ENCODE measurements at regions of chr10 and their contacts with region 1.

Region 1: DNA sequence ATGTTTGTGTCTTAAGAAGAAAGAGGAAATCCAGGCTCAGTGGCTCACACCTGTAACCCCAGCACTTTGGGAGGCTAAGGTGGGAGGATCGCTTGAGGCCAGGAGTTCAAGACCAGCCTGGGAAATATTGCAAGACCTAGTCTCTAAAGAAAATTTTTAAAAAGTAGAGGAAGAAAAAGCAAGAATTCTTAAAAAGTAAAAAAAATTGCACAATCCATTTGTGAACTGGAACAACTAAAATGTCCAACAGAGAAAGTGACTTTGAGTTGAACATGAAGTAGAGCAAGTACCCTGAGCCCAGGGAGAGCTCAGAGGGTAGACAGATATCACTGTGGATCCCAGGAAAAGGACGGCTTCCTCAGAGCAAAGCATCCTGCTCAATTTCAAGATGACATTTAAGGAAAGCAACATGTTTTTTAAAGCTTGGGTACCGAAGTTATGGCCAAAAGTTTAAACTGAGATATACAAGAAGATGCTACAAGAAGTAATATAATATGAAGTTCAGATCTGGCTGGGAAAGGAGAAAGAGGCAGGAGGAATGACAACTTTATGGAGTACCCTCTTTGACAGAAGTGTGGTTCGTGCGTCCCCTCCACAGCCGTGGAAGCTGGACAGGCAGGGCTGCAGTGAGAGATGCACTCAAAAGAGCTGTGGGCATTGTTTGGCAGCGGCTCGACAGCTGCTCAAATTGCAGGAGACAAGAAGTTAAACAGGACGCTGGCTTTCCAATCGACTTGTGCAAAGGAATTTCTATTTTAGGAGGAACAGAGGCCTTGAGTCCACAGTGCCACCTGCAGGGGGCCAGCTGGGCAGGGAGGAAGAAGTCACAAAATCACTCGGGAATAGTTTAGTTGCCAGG is 201.3 kb downstream of the JCAD start:
- DNase-seq: peak; percentile 80 to 86
- ATAC-seq: peak; percentile 81
- H3K4me3 ChIP-seq: no peak overlapping the region
- H3K27ac ChIP-seq: peak overlapping the region in 1 of 2 donors; percentile 60
- H3K4me1 ChIP-seq: peaks cover 0 to 4% of the 10 kb centered on the region in 2 donors
- H3K27me3 ChIP-seq: no peaks in the 10 kb centered on the region

Region 2: GRCh38 chr10:29482591-29483431 is 375.3 kb before region 1 on chr10:
- intact Hi-C with region 1: no loop called
- DNase-seq: no peak
- ATAC-seq: no peak
- H3K4me3 ChIP-seq: no peak overlapping the region
- H3K27ac ChIP-seq: no peak overlapping the region
- H3K4me1 ChIP-seq: no peaks in the 10 kb centered on the region
- H3K27me3 ChIP-seq: no peaks in the 10 kb centered on the region

Region 3: DNA sequence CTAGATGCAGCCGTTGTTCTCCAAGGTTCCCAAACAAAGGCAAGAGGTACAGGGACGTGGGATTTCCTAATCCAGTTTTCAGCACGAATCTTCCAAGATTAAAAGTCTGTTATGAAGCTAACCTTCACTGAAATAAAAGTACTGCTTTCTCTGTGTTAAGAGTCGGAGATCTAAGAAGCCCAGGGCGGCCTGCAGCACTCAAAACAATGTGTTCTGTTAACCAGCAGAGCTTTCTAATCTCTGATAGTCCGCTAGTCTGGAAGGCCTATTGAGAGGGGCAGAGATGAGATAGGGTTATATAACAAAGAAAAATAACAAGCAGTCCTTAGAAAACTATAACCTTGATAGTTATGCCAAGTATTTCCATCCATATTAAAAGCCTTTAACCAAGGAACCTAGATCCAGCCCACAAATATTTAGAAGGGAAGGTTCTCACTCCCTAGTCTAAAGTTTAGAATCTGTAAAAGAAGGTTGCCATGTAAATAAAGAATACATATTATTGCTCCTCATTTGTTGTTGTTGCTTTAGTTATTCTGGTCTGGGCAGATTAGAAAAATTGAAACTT is 117.0 kb before region 1 on chr10:
- intact Hi-C with region 1: loop called (anchors 2 to 5 kb)
- DNase-seq: no peak
- ATAC-seq: no peak
- H3K4me3 ChIP-seq: no peak overlapping the region
- H3K27ac ChIP-seq: peak overlapping the region; percentile 30 to 99
- H3K4me1 ChIP-seq: no peaks in the 10 kb centered on the region
- H3K27me3 ChIP-seq: no peaks in the 10 kb centered on the region

Region 4: GRCh38 chr10:29795850-29796249 is 62.2 kb before region 1 on chr10:
- intact Hi-C with region 1: loop called in 1 of 2 experiments (anchors 10 kb)
- DNase-seq: no peak
- ATAC-seq: peak; percentile 64
- H3K4me3 ChIP-seq: no peak overlapping the region
- H3K27ac ChIP-seq: peak overlapping the region; percentile 99 to 100
- H3K4me1 ChIP-seq: peaks cover 3 to 7% of the 10 kb centered on the region in 2 donors
- H3K27me3 ChIP-seq: no peaks in the 10 kb centered on the region

Region 5: DNA sequence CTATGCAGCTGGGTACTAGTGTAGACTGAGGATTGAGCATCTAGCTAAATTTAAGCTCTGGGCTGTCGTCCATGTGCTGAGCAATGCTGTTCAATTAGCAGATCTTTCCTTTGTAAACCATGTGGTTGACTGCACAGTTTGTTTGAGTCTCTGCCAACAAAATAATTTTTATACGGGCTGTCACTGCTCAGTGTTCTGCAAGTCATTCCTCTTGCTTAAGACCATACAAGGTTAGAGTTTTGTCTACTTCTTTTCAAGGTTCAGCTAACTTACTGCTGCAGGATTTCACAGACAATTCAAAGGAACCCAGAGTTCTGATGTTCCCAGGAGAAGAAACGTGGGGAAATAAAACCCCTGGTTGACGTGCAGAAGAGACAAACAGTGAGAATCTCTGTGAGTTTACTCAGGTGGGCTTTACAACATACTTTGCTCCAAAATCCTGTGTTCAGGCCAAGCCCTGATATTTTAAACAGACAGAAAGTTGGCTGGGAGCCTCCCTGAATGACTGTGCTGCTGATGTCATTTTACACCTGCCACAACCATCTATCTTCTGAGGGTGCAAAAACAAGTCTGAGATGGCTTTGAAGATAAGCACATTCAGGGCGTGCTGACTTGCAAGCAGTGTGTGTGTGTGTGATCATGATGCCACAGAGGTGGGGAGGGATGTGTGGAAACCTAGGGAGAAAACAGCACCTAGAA is 46.2 kb before region 1 on chr10:
- intact Hi-C with region 1: loop called in 1 of 2 experiments (anchors 2 kb)
- DNase-seq: peak in 1 of 2 donors; percentile 76
- ATAC-seq: peak; percentile 90
- H3K4me3 ChIP-seq: no peak overlapping the region
- H3K27ac ChIP-seq: peak overlapping the region; percentile 95 to 99
- H3K4me1 ChIP-seq: peaks cover 4 to 8% of the 10 kb centered on the region in 2 donors
- H3K27me3 ChIP-seq: no peaks in the 10 kb centered on the region

Measured in aorta (tissue), 5 donors.